Naive thymus-derived CD4-positive, alpha-beta T cell (primary cell): ENCODE measurements at regions of chr14 and their contacts with region 1.

Region 1: GRCh38 chr14:97620066-97620465 is 822.9 kb downstream of the VRK1 start:
- DNase-seq: peak in 1 of 9 donors; percentile 15
- ATAC-seq: no peak
- H3K4me3 ChIP-seq: peak overlapping the region; percentile 4
- H3K4me3 Mint-ChIP-seq: peak overlapping the region; percentile 72 to 95 (median 85)
- H3K27ac ChIP-seq: peak overlapping the region; percentile 76
- H3K27ac Mint-ChIP-seq: peak overlapping the region; percentile 95 to 100 (median 98)
- H3K4me1 ChIP-seq: peaks cover 37 to 38% of the 10 kb centered on the region in 2 donors
- H3K4me1 Mint-ChIP-seq: peaks cover 33 to 74% (median 58%) of the 10 kb centered on the region in 7 donors
- H3K27me3 ChIP-seq: no peaks in the 10 kb centered on the region
- H3K27me3 Mint-ChIP-seq: no peaks in the 10 kb centered on the region

Region 2: GRCh38 chr14:96525452-96525851 is 1094.6 kb before region 1 on chr14:
- CTCF ChIA-PET with region 1: no interaction called
- POLR2A ChIA-PET with region 1: no interaction called
- intact Hi-C with region 1: no loop called
- DNase-seq: no peak
- ATAC-seq: no peak
- H3K4me3 ChIP-seq: no peak overlapping the region
- H3K4me3 Mint-ChIP-seq: no peak overlapping the region
- H3K27ac ChIP-seq: no peak overlapping the region
- H3K27ac Mint-ChIP-seq: no peak overlapping the region
- H3K4me1 ChIP-seq: no peaks in the 10 kb centered on the region
- H3K4me1 Mint-ChIP-seq: peaks cover 2 to 18% (median 6%) of the 10 kb centered on the region in 7 donors
- H3K27me3 ChIP-seq: no peaks in the 10 kb centered on the region
- H3K27me3 Mint-ChIP-seq: no peaks in the 10 kb centered on the region

Region 3: DNA sequence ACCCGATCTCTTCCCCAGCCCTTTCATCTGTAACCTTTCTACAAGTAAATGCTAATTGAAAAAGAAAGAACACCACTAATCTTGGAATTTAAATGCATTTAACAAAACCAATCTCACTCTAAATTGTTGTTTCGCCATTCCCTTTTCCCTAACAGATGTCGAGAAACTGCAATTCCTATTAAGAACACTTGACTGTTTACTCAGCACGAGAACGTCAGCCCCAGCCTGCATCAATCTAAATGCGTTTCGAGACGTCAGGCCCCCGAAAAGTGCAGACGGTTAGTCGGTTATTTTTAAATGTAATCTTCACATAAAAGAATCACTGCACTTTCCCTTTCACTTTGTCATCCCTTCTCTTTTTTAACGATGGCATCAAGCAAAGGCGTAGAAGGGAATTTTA is 14.7 kb after region 1 on chr14:
- CTCF ChIA-PET with region 1: no interaction called
- POLR2A ChIA-PET with region 1: interaction called, 6 read pairs
- intact Hi-C with region 1: loop called in 1 of 2 experiments (anchors 1 kb)
- DNase-seq: peak in 7 of 9 donors; percentile 45 to 73 (median 64)
- ATAC-seq: peak; percentile 79
- H3K4me3 ChIP-seq: peak overlapping the region; percentile 50
- H3K4me3 Mint-ChIP-seq: peak overlapping the region; percentile 79 to 99 (median 88)
- H3K27ac ChIP-seq: peak overlapping the region; percentile 59
- H3K27ac Mint-ChIP-seq: peak overlapping the region; percentile 77 to 98 (median 91)
- H3K4me1 ChIP-seq: peaks cover 0 to 25% of the 10 kb centered on the region in 2 donors
- H3K4me1 Mint-ChIP-seq: peaks cover 39 to 78% (median 66%) of the 10 kb centered on the region in 7 donors
- H3K27me3 ChIP-seq: no peaks in the 10 kb centered on the region
- H3K27me3 Mint-ChIP-seq: peaks cover 0 to 15% (median 0%) of the 10 kb centered on the region in 5 donors

Region 4: DNA sequence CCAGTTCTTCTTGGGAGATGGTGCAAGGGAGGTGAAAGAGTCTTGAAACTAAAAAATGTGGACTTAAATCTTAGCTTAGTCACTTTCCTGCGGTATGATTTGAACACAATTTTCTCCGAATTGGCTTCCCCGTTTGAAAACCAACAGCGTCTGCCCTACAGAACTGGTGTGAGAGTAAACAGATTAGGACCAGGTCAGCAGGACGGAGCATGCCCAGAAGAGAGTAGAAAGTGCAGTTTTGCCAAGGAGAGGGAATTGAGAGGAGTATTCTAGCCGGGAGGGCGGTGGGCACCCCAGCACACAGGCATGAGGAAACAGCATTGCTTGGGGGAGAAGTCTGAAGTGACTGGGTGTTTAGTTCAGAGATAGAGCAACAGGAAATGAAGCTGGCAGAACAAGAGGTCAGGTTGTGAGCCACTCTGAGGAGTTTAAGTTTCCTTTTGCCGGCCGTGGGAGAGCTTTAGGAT is 104.2 kb after region 1 on chr14:
- CTCF ChIA-PET with region 1: interaction called, 6 read pairs
- POLR2A ChIA-PET with region 1: interaction called, 6 read pairs
- intact Hi-C with region 1: loop called (anchors 2 to 5 kb)
- DNase-seq: peak in 8 of 9 donors; percentile 38 to 67 (median 59)
- ATAC-seq: peak; percentile 77
- H3K4me3 ChIP-seq: peak overlapping the region; percentile 57
- H3K4me3 Mint-ChIP-seq: peak overlapping the region; percentile 78 to 92 (median 84)
- H3K27ac ChIP-seq: peak overlapping the region; percentile 80
- H3K27ac Mint-ChIP-seq: peak overlapping the region; percentile 92 to 99 (median 97)
- H3K4me1 ChIP-seq: peaks cover 28 to 72% of the 10 kb centered on the region in 2 donors
- H3K4me1 Mint-ChIP-seq: peaks cover 51 to 94% (median 86%) of the 10 kb centered on the region in 7 donors
- H3K27me3 ChIP-seq: no peaks in the 10 kb centered on the region
- H3K27me3 Mint-ChIP-seq: no peaks in the 10 kb centered on the region